MCF 10A (cell line): ENCODE measurements at regions of chr3 and their contacts with region 1.

Region 1: GRCh38 chr3:186617038-186617946 is 4.4 kb downstream of the AHSG start:
- DNase-seq: peak; percentile 99
- H3K4me3 Mint-ChIP-seq: peak overlapping the region; percentile 72
- H3K27ac Mint-ChIP-seq: peak overlapping the region; percentile 71
- H3K4me1 Mint-ChIP-seq: peaks cover 25% of the 10 kb centered on the region
- H3K27me3 Mint-ChIP-seq: no peaks in the 10 kb centered on the region
- CTCF ChIP-seq: peak; percentile 85

Region 2: DNA sequence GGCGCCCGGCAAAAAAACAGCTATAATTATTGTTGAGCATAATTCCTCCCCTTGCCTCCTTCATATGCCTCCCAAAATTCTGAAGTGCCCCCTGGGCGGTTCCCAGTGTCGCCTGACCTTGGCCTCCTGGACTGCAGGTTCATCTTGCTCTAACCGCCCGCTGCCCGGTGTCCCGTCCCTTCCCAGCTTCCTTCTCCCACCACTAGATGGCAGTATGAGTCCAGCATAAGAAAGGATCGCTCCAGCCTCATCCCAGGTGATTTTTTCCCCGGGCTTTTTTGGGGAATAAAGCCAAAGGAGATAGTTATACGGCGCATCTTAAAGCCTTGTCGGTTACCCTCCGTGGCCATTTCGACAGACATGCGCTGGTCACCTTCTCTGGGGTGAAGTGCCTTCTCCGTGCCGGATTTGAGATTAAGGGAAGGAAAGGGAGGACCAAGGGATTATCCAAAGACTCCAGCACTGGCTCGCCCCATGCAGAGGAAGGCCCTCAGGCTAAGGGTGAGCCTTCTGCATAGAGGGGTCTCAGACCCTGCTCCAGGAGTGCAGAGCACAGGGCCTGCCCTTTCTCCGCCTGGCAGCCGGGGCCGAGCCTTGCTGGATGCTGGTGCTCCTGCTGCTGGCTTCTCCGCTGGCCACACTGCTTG is 633.7 kb before region 1 on chr3:
- CTCF ChIA-PET with region 1: interaction called, 5 read pairs
- POLR2A ChIA-PET with region 1: no interaction called
- intact Hi-C with region 1: loop called (anchors 2 kb)
- DNase-seq: peak; percentile 85
- H3K4me3 Mint-ChIP-seq: no peak overlapping the region
- H3K27ac Mint-ChIP-seq: no peak overlapping the region
- H3K4me1 Mint-ChIP-seq: peaks cover 12% of the 10 kb centered on the region
- H3K27me3 Mint-ChIP-seq: no peaks in the 10 kb centered on the region
- CTCF ChIP-seq: peak; percentile 90

Region 3: DNA sequence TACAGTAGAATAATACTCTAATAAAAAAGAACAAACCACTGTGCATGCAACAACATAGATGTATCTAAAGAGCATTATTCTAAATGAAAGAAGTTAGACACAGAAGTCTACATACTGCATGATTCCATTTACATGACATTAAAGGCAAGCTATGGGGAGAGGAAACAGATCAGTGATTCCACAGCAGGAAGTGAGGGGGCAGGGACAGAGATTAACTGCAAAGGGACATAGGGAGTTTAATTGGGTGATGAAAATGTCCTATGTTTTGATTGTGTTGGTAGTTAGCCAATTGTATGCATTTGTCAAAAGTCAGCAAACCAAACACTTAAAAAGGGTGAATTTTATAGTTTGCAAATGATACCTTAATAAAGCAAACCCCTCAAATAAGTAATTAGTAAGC is 86.9 kb before region 1 on chr3:
- CTCF ChIA-PET with region 1: no interaction called
- POLR2A ChIA-PET with region 1: no interaction called
- intact Hi-C with region 1: no loop called
- DNase-seq: no peak
- H3K4me3 Mint-ChIP-seq: no peak overlapping the region
- H3K27ac Mint-ChIP-seq: no peak overlapping the region
- H3K4me1 Mint-ChIP-seq: no peaks in the 10 kb centered on the region
- H3K27me3 Mint-ChIP-seq: peaks cover 12% of the 10 kb centered on the region
- CTCF ChIP-seq: no peak

Region 4: GRCh38 chr3:186570096-186570940 is 47.0 kb before region 1 on chr3 and contains the start of gene DNAJB11:
- CTCF ChIA-PET with region 1: interaction called, 50 read pairs
- POLR2A ChIA-PET with region 1: interaction called, 25 read pairs
- intact Hi-C with region 1: no loop called
- DNase-seq: peak; percentile 99
- H3K4me3 Mint-ChIP-seq: peak within 1 kb of the TSS; percentile 79
- H3K27ac Mint-ChIP-seq: peak within 1 kb of the TSS; percentile 97
- H3K4me1 Mint-ChIP-seq: peaks cover 31% of the 10 kb centered on the region
- H3K27me3 Mint-ChIP-seq: no peaks in the 10 kb centered on the region
- CTCF ChIP-seq: no peak
- total RNA-seq, gene DNAJB11: 116 and 166 TPM in 2 replicates

Region 5: GRCh38 chr3:186630950-186631641 is 13.8 kb after region 1 on chr3:
- CTCF ChIA-PET with region 1: interaction called, 18 read pairs
- POLR2A ChIA-PET with region 1: interaction called, 5 read pairs
- intact Hi-C with region 1: no loop called
- DNase-seq: no peak
- H3K4me3 Mint-ChIP-seq: no peak overlapping the region
- H3K27ac Mint-ChIP-seq: no peak overlapping the region
- H3K4me1 Mint-ChIP-seq: no peaks in the 10 kb centered on the region
- H3K27me3 Mint-ChIP-seq: no peaks in the 10 kb centered on the region
- CTCF ChIP-seq: no peak

Region 6: GRCh38 chr3:186772701-186773424 is 155.6 kb after region 1 on chr3:
- CTCF ChIA-PET with region 1: interaction called, 10 read pairs
- POLR2A ChIA-PET with region 1: no interaction called
- intact Hi-C with region 1: no loop called
- DNase-seq: no peak
- H3K4me3 Mint-ChIP-seq: no peak overlapping the region
- H3K27ac Mint-ChIP-seq: no peak overlapping the region
- H3K4me1 Mint-ChIP-seq: no peaks in the 10 kb centered on the region
- H3K27me3 Mint-ChIP-seq: no peaks in the 10 kb centered on the region
- CTCF ChIP-seq: no peak

Region 7: DNA sequence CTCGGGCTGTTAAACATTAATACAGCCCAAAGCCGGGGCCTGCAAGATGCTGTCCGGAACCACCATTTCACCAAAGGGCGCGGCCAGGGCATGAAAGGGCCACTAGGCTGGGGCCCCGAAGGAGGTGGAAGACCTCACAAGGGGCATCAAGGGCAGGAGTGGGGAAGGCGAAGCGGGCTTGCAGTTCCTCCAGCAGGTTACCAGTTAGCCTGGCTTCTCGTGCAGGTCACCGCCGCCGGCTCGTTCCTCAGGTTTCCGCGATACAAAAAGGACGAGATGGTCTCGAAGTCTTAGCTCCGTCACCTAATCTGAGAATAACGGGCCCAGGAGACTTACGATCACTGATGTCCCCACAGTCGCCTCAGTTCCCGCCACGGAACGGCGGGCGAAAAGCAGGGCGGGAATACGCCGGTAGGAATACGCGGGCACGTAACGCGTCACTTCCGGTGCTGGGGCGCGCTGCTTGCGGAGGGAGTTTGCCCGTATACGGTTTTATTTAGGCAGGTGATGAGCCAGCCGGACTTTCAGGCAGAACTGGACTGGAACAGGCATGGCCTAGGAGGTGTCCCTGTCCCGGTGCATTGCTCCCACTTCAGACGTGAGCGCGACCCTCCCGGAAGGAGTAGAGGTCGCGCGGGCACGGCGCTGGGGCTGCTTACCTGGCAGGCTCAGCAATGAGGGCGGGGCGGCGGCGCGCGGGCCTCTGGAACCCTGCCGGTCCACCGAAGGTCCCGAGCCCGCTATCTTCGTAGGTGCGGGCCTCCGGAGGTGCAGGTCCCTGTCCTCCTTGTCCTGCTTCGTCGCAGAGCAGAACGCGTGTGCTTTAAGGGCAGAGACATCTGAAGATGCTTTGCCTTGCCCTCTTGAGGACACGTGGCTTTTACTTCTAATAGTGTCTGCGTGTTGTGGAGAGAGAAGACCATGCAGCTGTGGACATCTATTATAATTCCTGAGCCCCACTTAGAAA is 189.1 kb after region 1 on chr3 and contains the start of gene RFC4:
- CTCF ChIA-PET with region 1: interaction called, 5 read pairs
- POLR2A ChIA-PET with region 1: interaction called, 17 read pairs
- intact Hi-C with region 1: no loop called
- DNase-seq: peak; percentile 77
- H3K4me3 Mint-ChIP-seq: peak within 1 kb of the TSS; percentile 79
- H3K27ac Mint-ChIP-seq: peak within 1 kb of the TSS; percentile 83
- H3K4me1 Mint-ChIP-seq: peaks cover 6% of the 10 kb centered on the region
- H3K27me3 Mint-ChIP-seq: no peaks in the 10 kb centered on the region
- CTCF ChIP-seq: no peak
- total RNA-seq, gene RFC4: 23.9 and 33.2 TPM in 2 replicates